PC-9 (cell line): ENCODE measurements at regions of chr11 and their contacts with region 1.

Region 1: GRCh38 chr11:69436973-69437875 is 44.2 kb upstream of the LINC01488 start:
- DNase-seq: peak; percentile 97 to 100
- H3K4me3 ChIP-seq: no peak overlapping the region
- H3K27ac ChIP-seq: peak overlapping the region; percentile 75
- H3K4me1 ChIP-seq: peaks cover 64% of the 10 kb centered on the region
- H3K27me3 ChIP-seq: no peaks in the 10 kb centered on the region
- CTCF ChIP-seq: peak; percentile 70

Region 2: GRCh38 chr11:69101115-69101791 is 336.0 kb before region 1 on chr11:
- CTCF ChIA-PET with region 1: no interaction called
- POLR2A ChIA-PET with region 1: no interaction called
- intact Hi-C with region 1: loop called (anchors 2 kb)
- DNase-seq: peak; percentile 82 to 91
- H3K4me3 ChIP-seq: no peak overlapping the region
- H3K27ac ChIP-seq: no peak overlapping the region
- H3K4me1 ChIP-seq: peaks cover 26% of the 10 kb centered on the region
- H3K27me3 ChIP-seq: no peaks in the 10 kb centered on the region
- CTCF ChIP-seq: peak; percentile 99

Region 3: GRCh38 chr11:69287968-69288882 is 149.0 kb before region 1 on chr11:
- CTCF ChIA-PET with region 1: no interaction called
- POLR2A ChIA-PET with region 1: interaction called, 15 read pairs
- intact Hi-C with region 1: no loop called
- DNase-seq: peak; percentile 90 to 98
- H3K4me3 ChIP-seq: peak overlapping the region; percentile 40; the same call in 1 of the 2 replicates
- H3K27ac ChIP-seq: peak overlapping the region; percentile 89
- H3K4me1 ChIP-seq: peaks cover 72% of the 10 kb centered on the region
- H3K27me3 ChIP-seq: no peaks in the 10 kb centered on the region
- CTCF ChIP-seq: no peak

Region 4: GRCh38 chr11:69382131-69383128 is 54.8 kb before region 1 on chr11:
- CTCF ChIA-PET with region 1: interaction called, 5 read pairs
- POLR2A ChIA-PET with region 1: interaction called, 11 read pairs
- intact Hi-C with region 1: loop called (anchors 1 kb)
- DNase-seq: peak; percentile 82 to 88
- H3K4me3 ChIP-seq: peak overlapping the region; percentile 43; the same call in 1 of the 2 replicates
- H3K27ac ChIP-seq: peak overlapping the region; percentile 59
- H3K4me1 ChIP-seq: peaks cover 30% of the 10 kb centered on the region
- H3K27me3 ChIP-seq: no peaks in the 10 kb centered on the region
- CTCF ChIP-seq: no peak

Region 5: DNA sequence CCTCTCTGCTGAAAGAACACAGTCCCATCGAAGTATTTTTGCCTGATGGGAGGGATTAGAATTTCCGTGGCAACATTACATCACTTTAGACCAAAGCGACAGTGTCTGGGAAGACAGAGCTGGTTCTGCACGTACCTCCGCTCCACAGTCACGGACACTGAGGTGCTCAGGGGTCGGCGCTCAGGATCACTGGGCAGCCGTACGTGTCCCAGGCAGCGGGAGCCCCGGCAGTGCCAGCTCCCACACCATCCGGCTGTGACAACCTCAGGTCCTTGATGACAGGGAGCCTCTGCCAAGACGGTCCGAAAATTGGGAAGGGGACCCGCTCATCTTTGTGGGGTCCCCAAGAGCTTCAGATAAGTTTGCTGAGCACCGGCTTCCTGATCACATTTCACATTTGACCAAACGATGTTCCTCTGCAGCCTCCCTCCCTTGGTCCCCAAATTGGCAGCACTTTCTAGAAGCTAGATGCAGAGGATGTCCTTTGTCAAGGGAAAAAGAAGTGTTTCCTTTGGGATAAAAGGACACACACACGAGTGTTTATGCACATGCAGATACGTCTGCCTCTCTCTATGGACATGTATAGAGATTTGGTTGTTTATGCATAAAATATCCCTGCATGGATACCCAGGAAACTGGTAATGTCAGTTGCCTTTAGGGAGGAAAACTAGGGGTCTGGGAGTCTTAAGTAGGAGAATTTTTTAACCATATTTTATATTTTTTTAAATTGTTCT is 17.4 kb before region 1 on chr11:
- CTCF ChIA-PET with region 1: interaction called, 3 read pairs
- POLR2A ChIA-PET with region 1: interaction called, 3 read pairs
- intact Hi-C with region 1: loop called (anchors 1 kb)
- DNase-seq: no peak
- H3K4me3 ChIP-seq: no peak overlapping the region; the same call in 1 of the 2 replicates
- H3K27ac ChIP-seq: peak overlapping the region; percentile 89
- H3K4me1 ChIP-seq: peaks cover 28% of the 10 kb centered on the region
- H3K27me3 ChIP-seq: no peaks in the 10 kb centered on the region
- CTCF ChIP-seq: no peak